ENCODE measurements at regions of chr19 and their contacts with region 1.

Region 1: GRCh38 chr19:42295831-42296525 is 6.0 kb upstream of the PRR19 start:
- DNase-seq: peak; percentile 83 to 97
- H3K4me3 ChIP-seq: no peak overlapping the region
- CTCF ChIP-seq: peak in 1 of 3 donors; percentile 77
- POLR2A ChIP-seq: no peak

Region 2: DNA sequence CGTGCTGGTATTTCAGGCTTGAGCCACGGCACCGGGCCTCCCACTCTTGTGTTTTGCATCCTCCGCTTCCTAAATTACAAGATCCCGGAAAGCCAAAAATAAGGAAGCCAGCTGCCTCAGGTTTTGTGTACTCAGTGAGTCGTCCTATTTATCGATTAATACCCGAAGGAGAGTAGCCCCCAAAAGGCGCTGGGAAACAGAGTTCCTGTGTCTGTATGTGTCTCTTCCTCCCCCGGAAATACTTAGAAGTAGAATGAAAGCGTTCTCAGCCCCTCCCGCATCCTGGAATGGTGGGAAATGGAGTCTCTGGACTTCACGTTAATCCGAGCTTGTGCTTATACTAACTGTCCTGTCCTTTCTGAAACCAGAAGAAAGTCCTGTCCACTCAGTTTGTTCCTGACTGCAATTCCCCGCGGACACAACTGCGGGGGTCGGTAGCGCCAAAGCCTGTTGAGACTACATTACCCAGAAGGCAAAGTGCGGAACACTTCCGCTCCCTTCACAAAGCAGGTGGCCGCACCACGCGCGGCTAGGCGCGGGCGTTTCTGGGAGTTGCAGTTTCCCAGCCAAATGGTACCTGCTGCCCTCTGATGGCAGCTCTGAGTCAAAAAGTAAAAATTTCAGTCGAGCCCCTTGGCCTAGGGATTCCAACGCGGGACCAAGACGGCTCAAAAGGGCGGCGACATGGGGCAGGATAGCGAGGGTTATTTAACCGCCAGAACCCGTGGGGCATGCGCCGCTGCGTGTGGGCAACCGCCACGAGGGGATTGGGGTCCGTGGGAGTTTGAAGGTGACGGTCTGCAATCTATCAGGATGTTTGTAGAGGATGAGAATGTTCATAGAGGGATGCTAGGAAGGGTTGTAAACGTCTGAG is 51.4 kb before region 1 on chr19:
- intact Hi-C with region 1: loop called (anchors 10 kb)
- DNase-seq: peak; percentile 93 to 99
- H3K4me3 ChIP-seq: peak overlapping the region; percentile 25
- CTCF ChIP-seq: no peak
- POLR2A ChIP-seq: peak in 1 of 2 donors; percentile 27